ENCODE measurements at regions of chr7 and their contacts with region 1.

Region 1: DNA sequence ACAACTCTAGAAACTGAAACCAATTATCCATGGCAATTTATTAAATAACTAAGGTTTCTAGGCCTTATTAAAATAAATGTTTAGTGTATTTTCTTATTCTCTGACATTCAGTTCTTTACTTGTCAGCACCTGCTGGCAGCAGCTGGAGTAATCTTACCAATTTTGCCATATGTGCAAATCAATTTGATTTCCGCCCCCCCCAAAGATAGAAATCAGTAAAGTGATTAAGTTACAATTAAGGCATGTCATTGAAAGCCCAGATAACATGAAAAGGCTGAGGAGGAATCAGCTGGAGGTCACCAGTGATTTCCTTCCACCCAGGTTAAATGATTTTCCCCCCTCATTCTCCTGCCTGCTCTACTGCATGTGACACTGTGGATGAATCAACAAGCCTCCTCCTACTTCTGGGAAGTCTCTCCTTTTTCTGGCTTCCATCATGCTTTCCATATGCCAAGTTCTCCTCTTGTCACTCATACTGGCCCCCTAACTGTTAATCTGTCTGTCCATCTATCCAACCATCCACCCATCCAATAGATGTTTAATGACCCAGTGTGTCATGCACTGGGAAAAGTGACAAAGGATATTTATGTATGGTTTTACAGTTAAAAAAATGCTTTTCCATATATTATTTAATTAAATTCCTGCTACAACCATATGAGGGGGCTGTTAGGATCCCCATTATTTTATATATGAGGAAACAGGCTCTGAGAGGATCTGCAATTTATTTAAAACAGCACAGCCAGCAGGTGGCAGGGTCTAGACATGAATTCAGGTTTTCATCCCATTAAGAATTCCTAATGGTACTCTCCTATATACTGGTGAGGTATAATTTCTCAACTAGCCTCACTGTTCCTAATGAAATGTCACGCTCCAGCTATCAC is 116.5 kb downstream of the ATXN7L1 start:
- DNase-seq: peak; percentile 57 to 64
- H3K4me3 ChIP-seq: no peak overlapping the region
- H3K27ac ChIP-seq: no peak overlapping the region
- H3K4me1 ChIP-seq: no peaks in the 10 kb centered on the region
- H3K27me3 ChIP-seq: no peaks in the 10 kb centered on the region
- CTCF ChIP-seq: peak; percentile 83

Region 2: GRCh38 chr7:105652359-105652993 is 107.4 kb before region 1 on chr7:
- CTCF ChIA-PET with region 1: interaction called, 6 read pairs
- POLR2A ChIA-PET with region 1: no interaction called
- intact Hi-C with region 1: loop called (anchors 1 kb)
- DNase-seq: peak; percentile 43 to 79
- H3K4me3 ChIP-seq: no peak overlapping the region
- H3K27ac ChIP-seq: no peak overlapping the region
- H3K4me1 ChIP-seq: peaks cover 47% of the 10 kb centered on the region
- H3K27me3 ChIP-seq: no peaks in the 10 kb centered on the region
- CTCF ChIP-seq: peak; percentile 87

Region 3: GRCh38 chr7:105795390-105795729 is 35.5 kb after region 1 on chr7:
- CTCF ChIA-PET with region 1: no interaction called
- POLR2A ChIA-PET with region 1: no interaction called
- intact Hi-C with region 1: no loop called
- DNase-seq: no peak
- H3K4me3 ChIP-seq: no peak overlapping the region
- H3K27ac ChIP-seq: peak overlapping the region; percentile 48; the same call in 1 of the 2 replicates
- H3K4me1 ChIP-seq: peaks cover 47% of the 10 kb centered on the region
- H3K27me3 ChIP-seq: no peaks in the 10 kb centered on the region
- CTCF ChIP-seq: no peak

Region 4: DNA sequence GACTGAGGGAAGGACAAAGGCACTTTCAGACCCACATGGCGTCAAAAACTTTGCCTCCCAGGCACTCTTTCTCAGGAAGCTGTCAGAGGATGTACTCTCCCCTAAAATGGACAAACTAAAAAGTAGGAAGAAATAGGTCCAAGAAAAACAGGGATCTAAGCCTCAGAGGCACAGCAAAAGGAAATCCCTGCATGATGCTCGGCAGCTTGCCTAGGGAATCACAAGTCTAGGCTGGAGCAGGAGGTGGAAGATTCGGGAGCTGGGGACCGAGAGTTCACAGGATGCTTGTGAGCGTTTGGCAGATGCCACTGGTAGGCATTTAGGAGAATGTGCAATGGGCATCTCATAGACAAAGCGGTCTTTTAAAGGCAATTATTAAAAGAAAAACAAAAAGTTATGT is 55.7 kb after region 1 on chr7:
- CTCF ChIA-PET with region 1: interaction called, 10 read pairs
- POLR2A ChIA-PET with region 1: no interaction called
- intact Hi-C with region 1: no loop called
- DNase-seq: no peak
- H3K4me3 ChIP-seq: no peak overlapping the region
- H3K27ac ChIP-seq: no peak overlapping the region
- H3K4me1 ChIP-seq: no peaks in the 10 kb centered on the region
- H3K27me3 ChIP-seq: no peaks in the 10 kb centered on the region
- CTCF ChIP-seq: no peak

Region 5: DNA sequence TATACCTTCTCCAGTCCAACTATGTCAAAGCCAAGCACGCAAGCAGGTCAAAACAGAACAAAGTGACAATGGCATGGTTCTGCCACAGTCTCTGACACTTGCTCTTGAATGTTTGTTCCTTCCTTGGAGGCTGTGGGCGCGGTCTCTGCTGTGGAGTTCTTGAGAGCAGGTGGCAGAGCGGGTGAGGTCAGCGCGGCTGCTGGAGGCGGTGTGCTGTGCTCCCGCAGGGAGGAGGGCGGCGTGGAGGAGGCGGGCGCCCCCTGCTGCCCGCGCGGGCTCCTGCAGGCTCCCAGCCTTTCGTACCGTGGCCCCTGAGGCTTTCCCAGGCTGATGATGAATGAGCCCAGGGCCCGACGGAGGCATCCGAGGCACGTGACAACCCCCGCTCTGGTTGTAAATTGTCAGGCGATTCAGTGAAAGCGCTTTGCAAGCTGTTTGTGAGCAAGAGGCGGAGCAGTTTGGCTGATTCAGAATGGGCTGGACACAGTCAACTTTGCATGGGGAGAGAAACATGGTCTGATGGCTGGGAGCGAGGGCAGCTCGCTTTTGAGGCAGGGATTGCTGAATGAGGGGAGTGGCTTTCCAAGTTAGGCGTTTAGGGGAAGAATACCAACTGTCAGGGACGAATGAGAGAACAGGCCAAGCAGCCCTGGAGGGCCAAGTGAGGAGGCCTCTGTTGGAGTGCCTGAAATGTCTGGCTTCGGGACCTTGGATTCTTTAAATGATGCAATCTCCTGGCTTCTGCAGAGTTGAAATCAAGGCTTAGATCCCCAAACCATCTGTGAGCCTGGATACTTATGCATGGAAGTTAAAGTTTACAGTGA is 249.7 kb after region 1 on chr7:
- CTCF ChIA-PET with region 1: interaction called, 11 read pairs
- POLR2A ChIA-PET with region 1: no interaction called
- intact Hi-C with region 1: loop called (anchors 1 kb)
- DNase-seq: peak; percentile 77 to 94
- H3K4me3 ChIP-seq: peak overlapping the region; percentile 4; the same call in 1 of the 2 replicates
- H3K27ac ChIP-seq: no peak overlapping the region
- H3K4me1 ChIP-seq: peaks cover 6% of the 10 kb centered on the region
- H3K27me3 ChIP-seq: no peaks in the 10 kb centered on the region
- CTCF ChIP-seq: peak; percentile 94

Region 6: DNA sequence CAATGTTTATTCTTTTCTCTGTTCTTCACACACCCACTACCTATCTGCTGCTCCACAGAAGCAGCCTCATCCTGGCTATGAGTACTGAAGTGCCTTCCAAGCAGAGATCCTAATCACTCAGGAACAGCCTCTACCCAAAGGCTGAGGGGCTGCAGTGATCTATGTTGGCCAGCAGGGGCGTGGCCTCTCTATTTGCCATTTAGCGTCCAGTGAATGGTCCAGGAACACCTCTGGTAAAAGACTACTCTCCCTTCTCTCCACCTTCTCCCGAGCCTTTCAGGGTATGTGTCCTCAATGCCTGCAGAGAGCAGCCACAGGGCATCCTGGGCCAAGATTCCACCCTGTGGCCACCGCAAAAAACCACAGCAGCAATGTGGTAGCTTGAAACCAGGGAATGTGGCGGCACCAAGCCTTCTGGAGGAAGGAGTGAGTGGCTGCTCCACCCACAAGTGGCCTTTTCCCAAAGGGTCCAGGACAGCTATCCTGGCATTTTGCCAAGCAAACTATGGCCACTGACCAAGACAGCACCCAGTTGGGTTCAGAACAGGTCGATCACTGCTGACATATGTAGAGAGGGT is 281.3 kb after region 1 on chr7:
- CTCF ChIA-PET with region 1: interaction called, 6 read pairs
- POLR2A ChIA-PET with region 1: no interaction called
- intact Hi-C with region 1: loop called (anchors 1 kb)
- DNase-seq: peak; percentile 39 to 48
- H3K4me3 ChIP-seq: no peak overlapping the region
- H3K27ac ChIP-seq: no peak overlapping the region
- H3K4me1 ChIP-seq: peaks cover 6% of the 10 kb centered on the region; the same call in 1 of the 2 replicates
- H3K27me3 ChIP-seq: 0 out of 2 replicates have a peak, but pooled peaks cover 7% of the 10 kb centered on the region
- CTCF ChIP-seq: peak; percentile 80

Region 7: GRCh38 chr7:106153891-106154449 is 394.1 kb after region 1 on chr7:
- CTCF ChIA-PET with region 1: no interaction called
- POLR2A ChIA-PET with region 1: no interaction called
- intact Hi-C with region 1: loop called (anchors 1 kb)
- DNase-seq: peak; percentile 68 to 89
- H3K4me3 ChIP-seq: no peak overlapping the region
- H3K27ac ChIP-seq: no peak overlapping the region
- H3K4me1 ChIP-seq: peaks cover 12% of the 10 kb centered on the region
- H3K27me3 ChIP-seq: no peaks in the 10 kb centered on the region
- CTCF ChIP-seq: peak; percentile 94

Region 8: GRCh38 chr7:106166655-106167342 is 406.9 kb after region 1 on chr7:
- CTCF ChIA-PET with region 1: no interaction called
- POLR2A ChIA-PET with region 1: no interaction called
- intact Hi-C with region 1: loop called (anchors 5 kb)
- DNase-seq: peak; percentile 51 to 53
- H3K4me3 ChIP-seq: no peak overlapping the region
- H3K27ac ChIP-seq: no peak overlapping the region
- H3K4me1 ChIP-seq: no peaks in the 10 kb centered on the region
- H3K27me3 ChIP-seq: no peaks in the 10 kb centered on the region
- CTCF ChIP-seq: peak; percentile 92